ENCODE measurements at regions of chr3 and their contacts with region 1.

Region 1: DNA sequence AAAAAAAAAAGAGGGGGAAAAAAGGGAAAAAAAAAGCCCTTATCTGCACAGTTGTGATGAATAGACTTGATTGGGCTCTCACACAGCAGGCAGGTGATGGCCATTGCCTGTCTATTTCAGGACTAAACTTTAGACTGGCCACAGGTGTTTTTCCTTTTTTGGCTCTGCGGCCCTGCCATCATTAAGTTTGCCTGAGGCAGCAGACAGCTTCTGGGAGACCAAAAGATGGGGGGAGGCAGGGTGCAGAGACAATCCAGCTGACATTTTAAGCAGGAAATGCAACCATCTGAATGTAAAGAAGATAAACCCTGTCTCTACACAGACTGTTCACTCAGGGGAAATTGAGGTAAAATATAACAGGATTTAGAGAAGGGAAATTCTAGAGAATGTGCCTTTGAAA is 295.0 kb upstream of the KCNH8 start:
- DNase-seq: no peak
- ATAC-seq: no peak

Region 2: DNA sequence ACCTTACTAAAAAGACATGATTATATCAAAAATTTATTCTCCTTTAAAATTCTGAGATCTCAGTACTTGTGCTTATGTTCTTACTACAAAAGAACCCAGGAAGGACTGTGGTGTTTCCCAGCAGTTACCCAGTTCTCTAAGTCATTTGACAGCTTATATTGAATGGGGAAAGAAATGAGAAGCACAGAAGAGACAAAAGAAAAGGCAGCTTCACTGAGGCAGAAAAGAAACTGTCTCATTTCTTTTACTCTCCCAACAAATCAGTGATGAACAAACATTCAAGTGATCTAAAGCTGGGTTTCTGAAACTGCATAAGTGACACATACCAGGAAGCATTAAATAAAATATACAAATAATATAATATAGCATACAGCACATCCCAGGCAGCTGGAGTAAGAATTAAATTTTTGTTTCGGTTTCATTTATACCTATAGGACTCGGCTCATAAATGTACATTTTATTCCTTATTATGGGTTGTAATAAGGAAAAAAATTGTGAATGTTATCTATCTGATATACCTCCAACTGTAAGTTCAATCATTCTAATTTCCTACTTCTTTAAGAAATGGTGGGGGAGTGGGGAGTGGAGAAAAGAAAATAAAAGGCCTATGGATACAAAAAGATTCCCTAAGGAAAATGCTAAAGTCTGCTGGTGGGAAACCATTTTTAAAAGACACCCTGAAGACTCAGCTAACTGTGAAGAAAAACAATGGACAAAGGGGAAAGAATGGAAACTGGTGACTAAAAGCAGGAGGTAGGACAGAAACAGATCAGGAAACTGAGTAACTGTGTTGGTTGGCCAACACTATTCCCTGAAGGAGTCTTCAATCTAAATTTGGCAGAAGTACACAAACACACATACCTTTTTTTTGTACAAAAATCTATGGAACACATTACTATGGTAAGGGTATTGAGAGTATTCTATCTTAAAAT is 1267.6 kb before region 1 on chr3:
- intact Hi-C with region 1: loop called (anchors 5 kb)
- DNase-seq: no peak
- ATAC-seq: no peak